H1 (cell line): ENCODE measurements at regions of chr20 and their contacts with region 1.

Region 1: DNA sequence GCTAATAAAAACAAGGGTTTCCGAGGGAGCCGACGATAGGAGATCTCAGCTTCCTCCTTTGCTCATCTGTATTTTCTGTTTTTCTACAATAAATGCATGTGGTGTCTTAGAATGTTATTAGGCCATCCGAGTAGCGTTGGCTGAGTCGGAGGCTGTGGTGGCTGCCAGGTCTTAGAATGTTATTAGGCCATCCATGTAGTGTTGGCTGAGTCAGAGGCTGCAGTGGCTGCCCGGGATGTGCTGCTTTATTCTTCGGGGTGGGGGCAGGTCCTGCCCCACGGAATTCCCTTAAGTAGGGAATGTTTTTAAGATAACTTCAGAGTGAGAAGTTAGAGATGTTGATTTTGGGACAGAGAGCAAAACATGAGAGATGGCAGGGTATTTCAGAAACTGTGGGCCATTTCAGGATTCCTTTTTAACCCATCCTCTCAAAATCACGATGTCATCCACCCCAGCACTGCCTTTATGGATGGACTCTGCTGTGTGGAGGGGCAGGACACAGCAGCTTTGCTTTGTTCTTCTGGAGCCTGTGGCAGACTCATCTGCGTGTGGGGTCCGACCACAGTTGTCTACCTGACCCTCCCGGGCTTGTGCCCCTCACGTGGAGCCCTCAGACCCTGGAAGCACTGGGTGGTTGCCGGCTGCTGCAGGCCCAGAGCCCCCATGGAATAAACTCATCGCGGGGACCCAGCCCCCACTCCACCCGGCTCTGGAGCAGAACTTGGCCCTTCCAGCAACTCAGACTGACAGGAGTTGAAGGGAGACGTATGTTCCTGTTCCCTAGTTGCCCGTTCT is 20.4 kb downstream of the OSBPL2 start:
- DNase-seq: no peak
- H3K4me3 ChIP-seq: no peak overlapping the region
- H3K27ac ChIP-seq: no peak overlapping the region
- H3K4me1 ChIP-seq: no peaks in the 10 kb centered on the region
- H3K27me3 ChIP-seq: no peaks in the 10 kb centered on the region
- CTCF ChIP-seq: no peak
- EP300 ChIP-seq: no peak
- POLR2A ChIP-seq: no peak
- RAD21 ChIP-seq: no peak

Region 2: GRCh38 chr20:62165762-62166399 is 92.8 kb before region 1 on chr20:
- CTCF ChIA-PET with region 1: no interaction called
- POLR2A ChIA-PET with region 1: no interaction called
- DNase-seq: no peak
- H3K4me3 ChIP-seq: no peak overlapping the region
- H3K27ac ChIP-seq: no peak overlapping the region
- H3K4me1 ChIP-seq: no peaks in the 10 kb centered on the region
- H3K27me3 ChIP-seq: no peaks in the 10 kb centered on the region
- CTCF ChIP-seq: no peak
- EP300 ChIP-seq: no peak
- POLR2A ChIP-seq: no peak
- RAD21 ChIP-seq: no peak

Region 3: GRCh38 chr20:62246872-62247665 is 11.6 kb before region 1 on chr20:
- CTCF ChIA-PET with region 1: interaction called, 18 read pairs
- POLR2A ChIA-PET with region 1: interaction called, 4 read pairs
- DNase-seq: no peak
- H3K4me3 ChIP-seq: no peak overlapping the region
- H3K27ac ChIP-seq: no peak overlapping the region
- H3K4me1 ChIP-seq: peaks cover 0 to 3% (median 0%) of the 10 kb centered on the region in 4 experiments; a peak in 2 of 7 replicates
- H3K27me3 ChIP-seq: no peaks in the 10 kb centered on the region
- CTCF ChIP-seq: no peak
- EP300 ChIP-seq: no peak
- POLR2A ChIP-seq: no peak
- RAD21 ChIP-seq: no peak